ENCODE measurements at regions of chr6 and their contacts with region 1.

Region 1: DNA sequence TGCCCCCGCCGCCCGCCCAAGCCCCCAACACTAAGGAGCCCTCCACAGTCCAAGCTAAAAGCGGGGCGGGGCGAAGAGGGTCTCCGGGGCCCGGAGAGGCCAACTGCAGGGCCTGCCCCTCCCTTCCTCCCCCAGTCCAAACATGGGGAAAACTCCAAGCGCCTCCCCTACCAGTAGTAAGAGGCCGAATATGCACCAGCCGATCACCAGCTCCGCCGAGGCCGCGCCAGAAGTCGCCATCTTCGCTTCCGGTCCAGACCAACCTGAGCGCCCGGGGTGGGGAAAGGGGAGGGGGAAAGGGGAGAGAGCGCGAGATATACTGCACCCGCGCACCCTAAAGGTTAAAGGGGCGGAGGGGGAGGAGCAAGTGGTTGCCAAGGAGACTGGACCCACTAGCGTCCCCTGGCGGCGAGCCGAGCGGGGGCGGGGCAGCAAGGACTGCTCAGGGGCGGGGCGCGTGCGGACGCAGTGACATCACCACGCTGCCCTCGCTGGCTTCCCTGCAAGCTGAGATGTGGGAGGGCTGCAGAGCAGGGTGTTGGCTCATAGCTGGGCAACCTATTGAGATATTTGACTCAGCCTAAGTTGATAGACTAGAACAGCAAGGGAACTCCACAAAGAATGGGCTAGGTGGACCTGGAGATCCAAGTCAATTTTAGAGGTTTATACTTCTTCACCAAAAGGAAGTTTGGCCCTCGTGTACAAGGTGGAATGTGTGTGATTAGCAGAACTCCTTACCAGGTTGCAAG is at the start of gene LMBRD1:
- DNase-seq: peak; percentile 97
- H3K4me3 Mint-ChIP-seq: peak within 1 kb of the TSS; percentile 93
- H3K27ac Mint-ChIP-seq: peak within 1 kb of the TSS; percentile 92
- H3K4me1 Mint-ChIP-seq: peaks cover 28% of the 10 kb centered on the region
- H3K27me3 Mint-ChIP-seq: peaks cover 3% of the 10 kb centered on the region
- total RNA-seq, gene LMBRD1: 16.6 TPM in 2 replicates

Region 2: DNA sequence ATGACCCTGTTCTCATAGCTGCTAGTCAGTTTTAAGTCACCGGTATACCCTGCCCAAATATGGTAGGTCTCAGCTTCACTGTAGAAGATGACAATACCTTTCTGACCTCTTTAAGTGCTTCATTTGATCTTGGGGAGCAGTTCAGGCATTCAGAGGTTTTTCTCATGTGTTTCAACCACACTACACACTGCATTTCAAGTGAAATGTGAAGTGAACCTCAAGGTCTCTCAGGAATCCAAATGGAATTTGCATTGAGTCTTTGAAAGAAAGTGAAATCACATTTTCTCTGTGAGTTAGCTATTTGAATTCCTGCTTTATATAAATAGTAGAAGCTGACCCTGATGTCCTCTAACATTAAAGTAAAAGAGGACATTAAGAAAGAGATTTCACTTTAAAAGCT is 700.1 kb before region 1 on chr6:
- intact Hi-C with region 1: no loop called
- DNase-seq: no peak
- H3K4me3 Mint-ChIP-seq: no peak overlapping the region
- H3K27ac Mint-ChIP-seq: no peak overlapping the region
- H3K4me1 Mint-ChIP-seq: no peaks in the 10 kb centered on the region
- H3K27me3 Mint-ChIP-seq: no peaks in the 10 kb centered on the region

Region 3: GRCh38 chr6:69631552-69632346 is 165.1 kb before region 1 on chr6:
- intact Hi-C with region 1: loop called (anchors 5 kb)
- DNase-seq: peak; percentile 31
- H3K4me3 Mint-ChIP-seq: peak overlapping the region; percentile 19
- H3K27ac Mint-ChIP-seq: peak overlapping the region; percentile 64
- H3K4me1 Mint-ChIP-seq: peaks cover 26% of the 10 kb centered on the region
- H3K27me3 Mint-ChIP-seq: peaks cover 8% of the 10 kb centered on the region

Region 4: DNA sequence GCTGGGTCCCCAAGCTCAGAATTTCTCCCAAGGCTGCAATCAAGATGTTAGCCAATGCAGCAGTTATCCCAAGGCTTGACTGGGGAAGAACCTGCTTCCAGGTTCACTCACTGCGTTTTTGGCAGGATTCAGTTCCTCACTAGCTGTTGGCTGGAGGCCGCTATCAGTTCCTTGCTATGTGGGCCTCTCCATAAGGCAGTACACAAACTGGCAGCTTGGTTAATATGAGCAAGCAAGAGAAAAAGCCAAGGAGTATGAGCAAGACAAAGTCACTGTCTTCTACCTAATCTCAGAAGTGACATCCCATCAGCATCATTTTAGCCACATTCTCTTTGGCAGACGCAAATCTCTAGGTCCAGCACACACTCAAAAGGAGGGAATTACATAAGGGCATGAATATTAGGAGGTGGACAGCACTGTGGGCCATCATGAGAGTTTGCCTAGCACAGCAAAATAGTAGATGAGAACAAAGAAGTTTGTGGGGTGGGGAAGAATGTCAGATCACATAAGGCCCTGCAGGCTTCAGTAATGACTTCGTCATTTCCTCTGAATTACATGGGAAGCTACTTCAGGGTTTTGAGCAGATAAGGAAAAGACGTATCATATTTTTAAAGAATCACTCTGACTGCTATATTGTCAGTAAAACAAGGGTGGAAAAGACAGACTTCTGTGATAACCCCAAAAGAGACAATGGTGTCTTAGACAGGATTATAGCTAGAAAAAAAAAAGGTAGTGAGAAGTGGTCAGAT is 25.5 kb before region 1 on chr6:
- intact Hi-C with region 1: loop called (anchors 2 kb)
- DNase-seq: no peak
- H3K4me3 Mint-ChIP-seq: no peak overlapping the region
- H3K27ac Mint-ChIP-seq: peak overlapping the region; percentile 65
- H3K4me1 Mint-ChIP-seq: peaks cover 17% of the 10 kb centered on the region
- H3K27me3 Mint-ChIP-seq: no peaks in the 10 kb centered on the region

Region 5: DNA sequence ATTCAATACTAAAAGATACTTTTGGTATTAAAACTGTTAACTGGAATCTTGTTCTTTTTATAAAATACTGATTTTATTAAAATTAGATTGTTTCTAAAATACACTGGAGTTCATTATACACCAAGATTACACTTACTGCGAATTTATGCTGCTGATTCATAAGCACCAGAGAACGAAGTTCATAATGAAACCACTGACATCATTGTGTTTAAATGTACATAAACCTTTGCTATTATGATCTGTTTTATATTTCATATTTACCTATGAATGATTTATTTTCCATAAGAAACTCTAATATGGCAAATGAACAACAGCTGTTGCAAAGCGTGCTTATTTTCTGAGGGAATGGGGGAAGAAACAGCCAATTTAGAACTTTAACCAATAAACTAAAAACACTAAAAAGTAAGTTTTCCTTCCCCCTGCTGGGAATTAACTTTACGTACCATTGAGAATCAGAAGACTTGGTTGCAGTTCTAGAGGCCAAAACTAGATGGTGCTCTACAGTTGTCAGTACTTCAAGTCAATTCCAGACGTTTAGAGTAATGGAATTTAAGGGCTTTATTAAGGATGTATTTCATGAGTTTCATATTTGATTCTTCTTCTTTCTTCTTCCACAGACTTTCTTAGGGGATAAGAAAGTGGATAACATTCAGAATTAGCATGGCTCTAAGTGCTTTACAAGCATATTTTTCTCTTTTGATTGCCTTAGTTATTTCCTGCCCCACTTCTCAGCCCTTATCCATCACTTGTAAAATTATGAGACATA is 38.8 kb after region 1 on chr6:
- intact Hi-C with region 1: loop called (anchors 2 kb)
- DNase-seq: no peak
- H3K4me3 Mint-ChIP-seq: no peak overlapping the region
- H3K27ac Mint-ChIP-seq: no peak overlapping the region
- H3K4me1 Mint-ChIP-seq: peaks cover 9% of the 10 kb centered on the region
- H3K27me3 Mint-ChIP-seq: peaks cover 29% of the 10 kb centered on the region

Region 6: GRCh38 chr6:70667711-70668498 is 871.1 kb after region 1 on chr6 and contains the start of gene SMAP1:
- intact Hi-C with region 1: loop called (anchors 2 kb)
- DNase-seq: peak; percentile 91
- H3K4me3 Mint-ChIP-seq: peak within 1 kb of the TSS; percentile 90
- H3K27ac Mint-ChIP-seq: peak within 1 kb of the TSS; percentile 92
- H3K4me1 Mint-ChIP-seq: peaks cover 59% of the 10 kb centered on the region
- H3K27me3 Mint-ChIP-seq: no peaks in the 10 kb centered on the region
- total RNA-seq, gene SMAP1: 24.3 and 26.3 TPM in 2 replicates